ENCODE measurements at regions of chr7 and their contacts with region 1.

Region 1: DNA sequence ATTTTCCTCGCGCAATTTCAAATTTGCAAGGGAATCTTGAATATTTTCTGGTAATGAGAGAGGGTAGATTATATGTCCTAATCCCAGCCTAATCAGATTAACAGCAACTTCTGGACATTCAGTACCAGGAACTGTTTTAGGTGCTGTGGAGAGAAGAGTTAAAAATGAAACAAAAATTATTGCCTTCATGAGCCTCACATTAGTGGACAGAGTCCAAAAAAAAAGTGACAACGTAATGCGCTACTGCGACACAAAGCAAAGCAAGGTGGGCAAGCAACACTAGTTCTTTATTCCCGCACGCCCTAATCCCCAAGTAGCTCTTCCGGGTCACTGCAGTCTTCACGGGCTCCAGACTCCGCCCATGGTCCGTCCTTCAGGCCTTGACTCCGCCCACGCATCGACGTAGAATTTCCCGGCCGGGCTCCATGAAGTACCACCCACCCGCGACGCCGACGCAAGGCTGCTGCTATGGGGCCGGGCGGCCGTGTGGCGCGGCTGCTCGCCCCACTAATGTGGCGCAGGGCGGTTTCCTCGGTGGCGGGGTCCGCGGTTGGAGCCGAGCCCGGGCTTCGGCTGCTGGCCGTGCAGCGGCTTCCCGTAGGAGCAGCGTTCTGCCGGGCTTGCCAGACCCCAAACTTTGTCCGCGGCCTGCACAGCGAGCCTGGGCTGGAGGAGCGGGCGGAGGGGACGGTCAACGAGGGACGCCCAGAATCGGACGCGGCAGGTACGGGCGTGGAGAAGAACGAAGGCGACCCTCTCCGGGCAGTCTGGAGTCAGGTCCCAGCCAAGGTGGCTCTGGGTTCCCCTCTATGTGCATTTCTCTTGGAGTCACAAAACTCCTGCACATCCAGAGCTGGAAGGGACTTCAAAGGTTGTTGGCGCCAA is at the start of gene MALSU1:
- H3K4me3 Mint-ChIP-seq: peak within 1 kb of the TSS; percentile 89
- H3K27ac Mint-ChIP-seq: peak within 1 kb of the TSS; percentile 93
- H3K4me1 Mint-ChIP-seq: peaks cover 33% of the 10 kb centered on the region
- H3K27me3 Mint-ChIP-seq: no peaks in the 10 kb centered on the region

Region 2: DNA sequence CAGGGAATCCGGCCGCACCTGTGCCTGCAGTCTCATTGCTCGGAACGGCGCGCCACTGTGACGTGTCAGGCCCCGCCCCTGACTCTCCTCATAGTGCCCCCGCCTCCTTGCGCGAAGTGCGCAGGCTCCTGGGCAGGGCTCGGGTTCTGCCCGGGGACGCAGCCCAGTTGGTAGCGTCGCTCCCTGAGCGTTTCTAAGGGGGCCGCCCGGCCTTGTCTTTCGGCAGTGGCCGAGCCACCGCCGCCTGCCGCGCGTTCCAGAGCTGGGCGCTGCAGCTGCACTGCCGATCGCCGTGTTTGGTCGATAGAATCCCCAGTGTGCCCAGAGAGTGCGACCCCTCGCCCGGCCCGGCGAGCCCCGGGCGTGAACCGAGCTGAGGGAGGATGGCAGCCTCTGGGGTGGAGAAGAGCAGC is 193.5 kb before region 1 on chr7 and contains the start of gene KLHL7:
- intact Hi-C with region 1: loop called (anchors 5 kb)
- H3K4me3 Mint-ChIP-seq: peak within 1 kb of the TSS; percentile 99
- H3K27ac Mint-ChIP-seq: peak within 1 kb of the TSS; percentile 97
- H3K4me1 Mint-ChIP-seq: peaks cover 34% of the 10 kb centered on the region
- H3K27me3 Mint-ChIP-seq: no peaks in the 10 kb centered on the region

Region 3: DNA sequence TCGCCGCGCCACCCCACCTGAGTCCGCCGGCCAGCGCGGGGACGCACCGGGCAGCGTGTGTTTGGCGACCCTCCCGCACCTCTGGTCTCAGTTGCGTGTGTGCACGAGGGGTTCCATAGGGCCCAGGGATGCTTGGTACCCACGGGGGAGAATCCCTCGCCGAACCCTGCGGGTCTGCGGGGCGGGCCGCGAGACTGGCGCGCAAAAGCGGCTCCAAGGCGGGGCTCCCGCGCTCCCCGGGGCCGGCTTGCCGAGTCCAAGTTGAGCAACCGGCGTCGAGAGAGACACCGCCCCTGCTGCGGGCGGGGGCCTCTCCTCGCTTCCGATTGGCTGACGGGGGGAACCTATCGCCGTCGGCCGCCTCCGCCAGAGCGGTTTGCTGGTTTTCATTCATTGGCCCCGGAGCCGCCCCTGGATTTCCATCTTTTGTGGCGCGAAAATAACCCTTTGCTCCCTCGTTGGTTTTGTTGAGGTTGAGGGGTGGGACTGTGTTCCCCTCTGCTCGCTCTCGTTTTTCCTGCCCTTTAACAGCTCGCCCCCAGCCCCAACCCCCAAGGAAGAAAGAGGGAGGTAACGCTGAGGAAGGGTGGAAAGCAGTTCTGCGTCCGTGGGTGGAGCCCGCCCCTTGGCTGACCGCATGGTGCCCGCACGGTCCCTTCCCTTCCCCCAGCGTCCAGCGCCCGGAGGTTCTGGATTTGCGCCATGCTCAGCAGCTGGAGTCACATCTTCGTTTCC is 175.1 kb after region 1 on chr7:
- intact Hi-C with region 1: loop called (anchors 5 kb)
- H3K4me3 Mint-ChIP-seq: peak overlapping the region; percentile 79
- H3K27ac Mint-ChIP-seq: peak overlapping the region; percentile 15
- H3K4me1 Mint-ChIP-seq: peaks cover 31% of the 10 kb centered on the region
- H3K27me3 Mint-ChIP-seq: peaks cover 73% of the 10 kb centered on the region